Activated CD8-positive, alpha-beta memory T cell treated with anti-CD3 and anti-CD28 coated beads, Interleukin-2, amount 10 ng/mL, durations not matched to agents 7 days and 5 days (primary cell): ENCODE measurements at regions of chr4 and their contacts with region 1.

Region 1: GRCh38 chr4:139656614-139657486 is 8.8 kb upstream of the MGST2 start:
- DNase-seq: peak; percentile 66
- ATAC-seq: peak; percentile 61
- H3K4me3 Mint-ChIP-seq: peak overlapping the region; percentile 61
- H3K27ac Mint-ChIP-seq: peak overlapping the region; percentile 94
- H3K4me1 Mint-ChIP-seq: peaks cover 32% of the 10 kb centered on the region
- H3K27me3 Mint-ChIP-seq: peaks cover 2% of the 10 kb centered on the region

Region 2: DNA sequence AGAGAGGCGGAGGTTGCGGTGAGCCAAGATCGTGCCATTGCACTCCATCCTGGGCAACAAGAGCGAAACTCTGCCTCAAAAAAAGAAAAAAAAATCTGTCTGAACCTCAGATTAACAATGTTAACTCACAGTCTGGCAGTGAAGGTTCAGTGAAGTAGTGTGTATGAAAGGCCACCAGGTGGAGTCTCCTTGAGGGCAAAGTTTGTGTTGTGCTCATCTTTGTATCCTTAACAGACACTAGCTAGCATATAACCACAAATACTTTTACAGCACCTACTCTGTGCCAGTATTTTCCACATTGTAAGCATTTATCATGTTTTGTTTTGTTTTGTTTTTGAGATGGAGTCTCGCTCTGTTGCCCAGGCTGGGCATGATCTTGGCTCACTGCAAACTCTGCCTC is 37.2 kb before region 1 on chr4:
- CTCF ChIA-PET with region 1: interaction called, 15 read pairs
- DNase-seq: no peak
- ATAC-seq: peak; percentile 51
- H3K4me3 Mint-ChIP-seq: no peak overlapping the region
- H3K27ac Mint-ChIP-seq: no peak overlapping the region
- H3K4me1 Mint-ChIP-seq: peaks cover 2% of the 10 kb centered on the region
- H3K27me3 Mint-ChIP-seq: peaks cover 3% of the 10 kb centered on the region